ENCODE measurements at regions of chr17 and their contacts with region 1.

Region 1: DNA sequence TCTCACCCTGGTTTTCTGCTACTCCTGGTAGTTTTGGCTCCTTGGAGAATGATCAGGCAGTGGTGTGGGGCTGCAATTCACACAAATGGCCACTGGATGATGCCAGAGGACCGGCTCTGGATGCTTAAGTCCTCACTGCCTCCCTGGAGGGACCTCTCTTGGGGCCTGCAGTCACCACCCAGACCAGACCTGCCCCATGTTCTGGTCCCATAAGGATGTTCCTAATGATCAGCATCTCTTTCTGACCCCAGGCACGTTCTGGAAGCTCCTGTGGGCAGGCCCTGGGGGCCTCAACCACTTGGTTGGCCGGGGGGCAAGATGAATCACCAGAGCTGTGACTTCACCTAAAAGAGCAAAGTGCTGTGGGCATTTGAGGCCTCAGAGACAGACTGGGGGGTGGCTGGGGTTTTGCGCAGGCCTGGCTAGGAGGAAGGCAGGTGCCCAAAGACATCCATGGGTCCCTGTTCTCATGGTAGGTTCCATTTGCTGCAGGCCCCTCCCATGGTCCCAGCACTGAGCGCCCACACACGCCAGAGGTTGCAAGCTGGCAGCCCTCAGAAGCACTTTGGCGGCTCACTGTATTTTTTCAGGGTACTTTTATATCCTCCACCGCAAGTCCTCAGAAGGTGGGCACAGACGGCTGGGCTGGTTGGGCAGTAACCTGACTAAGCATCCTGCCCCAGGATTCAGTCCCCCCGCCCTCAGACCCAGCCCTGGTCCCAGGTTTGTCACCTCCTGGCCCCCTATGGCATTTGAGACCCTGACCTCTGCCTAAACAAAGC is 53.2 kb downstream of the NT5M start:
- DNase-seq: peak; percentile 91 to 96
- ATAC-seq: peak; percentile 86 to 91
- H3K4me3 ChIP-seq: no peak overlapping the region
- H3K27ac ChIP-seq: peak overlapping the region; percentile 55 to 63
- H3K4me1 ChIP-seq: no peaks in the 10 kb centered on the region
- CTCF ChIP-seq: peak; percentile 100
- EP300 ChIP-seq: no peak
- POLR2A ChIP-seq: no peak
- RAD21 ChIP-seq: peak; percentile 100

Region 2: DNA sequence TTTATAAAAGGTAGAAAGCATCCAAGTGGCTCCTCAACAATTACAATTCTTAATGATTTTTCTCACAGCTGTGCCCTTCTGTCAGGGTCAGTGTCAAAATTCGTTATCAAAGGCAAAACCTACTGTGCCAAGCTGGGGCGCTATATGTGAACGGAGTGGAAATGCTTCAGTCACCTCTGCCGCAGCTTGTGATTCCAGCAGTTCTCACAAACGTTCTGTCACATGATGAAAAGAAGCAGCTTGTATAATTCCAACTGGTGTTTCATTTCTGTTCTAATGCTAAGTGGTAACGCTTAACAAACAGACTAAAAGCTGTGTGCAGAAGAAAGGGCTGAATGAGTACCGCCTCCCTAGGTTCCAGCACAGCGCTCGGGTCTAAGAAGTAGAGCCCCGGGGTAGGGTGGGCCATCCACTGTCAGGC is 164.4 kb before region 1 on chr17:
- CTCF ChIA-PET with region 1: no interaction called
- POLR2A ChIA-PET with region 1: no interaction called
- DNase-seq: no peak
- ATAC-seq: no peak
- H3K4me3 ChIP-seq: no peak overlapping the region
- H3K27ac ChIP-seq: no peak overlapping the region
- H3K4me1 ChIP-seq: peaks cover 29% of the 10 kb centered on the region
- CTCF ChIP-seq: no peak
- EP300 ChIP-seq: no peak
- POLR2A ChIP-seq: no peak
- RAD21 ChIP-seq: no peak

Region 3: DNA sequence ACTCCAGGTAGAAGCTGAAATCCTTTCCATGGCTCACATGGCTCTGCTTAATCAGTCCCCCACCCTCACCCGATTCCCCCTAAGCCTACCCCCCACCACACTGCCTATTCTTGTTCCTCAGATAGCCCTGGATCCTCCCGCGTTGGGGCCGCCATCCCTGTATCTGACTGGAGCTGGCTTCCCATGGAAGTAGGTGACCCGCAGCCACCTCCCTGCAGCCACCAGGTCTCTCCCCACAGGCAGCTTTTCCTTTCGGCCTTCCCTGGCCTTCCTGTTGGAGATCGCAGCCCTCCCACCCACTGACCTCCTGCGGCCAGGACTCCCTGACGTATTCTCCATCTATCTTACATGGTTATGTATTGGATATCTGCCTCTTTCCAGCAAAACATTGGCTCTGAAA is 38.2 kb after region 1 on chr17:
- CTCF ChIA-PET with region 1: interaction called, 17 read pairs
- POLR2A ChIA-PET with region 1: no interaction called
- DNase-seq: no peak
- ATAC-seq: no peak
- H3K4me3 ChIP-seq: no peak overlapping the region
- H3K27ac ChIP-seq: no peak overlapping the region
- H3K4me1 ChIP-seq: no peaks in the 10 kb centered on the region
- CTCF ChIP-seq: no peak
- EP300 ChIP-seq: no peak
- POLR2A ChIP-seq: no peak
- RAD21 ChIP-seq: no peak

Region 4: DNA sequence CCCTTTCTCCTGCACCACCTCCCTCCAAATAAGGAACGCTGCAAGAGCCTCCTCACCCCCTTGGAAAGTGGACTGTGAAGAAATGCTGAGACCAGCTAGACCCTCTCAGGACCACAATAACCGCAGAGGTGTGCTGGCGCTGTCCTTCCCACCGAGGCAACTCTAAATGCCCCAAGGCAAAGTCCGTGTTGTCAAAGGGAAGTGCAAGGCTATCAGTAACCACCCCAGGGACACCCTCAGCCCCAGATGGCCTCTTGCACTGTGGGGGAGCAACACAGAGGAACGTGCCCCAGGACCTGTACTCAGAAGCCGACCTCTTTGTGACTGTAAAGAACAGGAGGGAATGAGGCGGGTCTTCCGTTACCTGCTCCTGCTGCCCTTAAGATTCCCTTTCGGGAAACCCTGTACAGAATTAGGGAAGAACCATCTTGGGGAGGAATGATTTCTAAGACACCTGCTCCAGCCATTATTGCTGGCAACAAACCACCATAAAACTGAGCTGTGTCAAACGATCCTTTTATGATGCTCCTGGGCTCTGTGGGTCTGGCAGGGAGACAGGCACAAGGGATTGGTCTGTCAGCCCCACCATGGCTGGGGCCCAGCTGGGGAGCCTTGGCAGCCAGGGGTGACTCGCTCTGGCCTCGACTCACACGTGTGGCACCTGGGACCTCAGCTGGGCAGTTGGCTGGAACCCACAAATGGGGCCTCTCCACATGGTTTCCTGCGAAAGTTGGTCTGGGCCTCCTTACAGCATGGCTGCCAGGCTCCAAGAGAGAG is 105.9 kb after region 1 on chr17:
- CTCF ChIA-PET with region 1: interaction called, 24 read pairs
- POLR2A ChIA-PET with region 1: no interaction called
- DNase-seq: no peak
- ATAC-seq: no peak
- H3K4me3 ChIP-seq: no peak overlapping the region
- H3K27ac ChIP-seq: no peak overlapping the region
- H3K4me1 ChIP-seq: no peaks in the 10 kb centered on the region
- CTCF ChIP-seq: no peak
- EP300 ChIP-seq: no peak
- POLR2A ChIP-seq: no peak
- RAD21 ChIP-seq: no peak

Region 5: GRCh38 chr17:17506811-17507464 is 150.6 kb after region 1 on chr17:
- CTCF ChIA-PET with region 1: interaction called, 24 read pairs
- POLR2A ChIA-PET with region 1: no interaction called
- DNase-seq: no peak
- ATAC-seq: no peak
- H3K4me3 ChIP-seq: no peak overlapping the region
- H3K27ac ChIP-seq: no peak overlapping the region
- H3K4me1 ChIP-seq: peaks cover 11% of the 10 kb centered on the region
- CTCF ChIP-seq: no peak
- EP300 ChIP-seq: no peak
- POLR2A ChIP-seq: no peak
- RAD21 ChIP-seq: no peak

Region 6: DNA sequence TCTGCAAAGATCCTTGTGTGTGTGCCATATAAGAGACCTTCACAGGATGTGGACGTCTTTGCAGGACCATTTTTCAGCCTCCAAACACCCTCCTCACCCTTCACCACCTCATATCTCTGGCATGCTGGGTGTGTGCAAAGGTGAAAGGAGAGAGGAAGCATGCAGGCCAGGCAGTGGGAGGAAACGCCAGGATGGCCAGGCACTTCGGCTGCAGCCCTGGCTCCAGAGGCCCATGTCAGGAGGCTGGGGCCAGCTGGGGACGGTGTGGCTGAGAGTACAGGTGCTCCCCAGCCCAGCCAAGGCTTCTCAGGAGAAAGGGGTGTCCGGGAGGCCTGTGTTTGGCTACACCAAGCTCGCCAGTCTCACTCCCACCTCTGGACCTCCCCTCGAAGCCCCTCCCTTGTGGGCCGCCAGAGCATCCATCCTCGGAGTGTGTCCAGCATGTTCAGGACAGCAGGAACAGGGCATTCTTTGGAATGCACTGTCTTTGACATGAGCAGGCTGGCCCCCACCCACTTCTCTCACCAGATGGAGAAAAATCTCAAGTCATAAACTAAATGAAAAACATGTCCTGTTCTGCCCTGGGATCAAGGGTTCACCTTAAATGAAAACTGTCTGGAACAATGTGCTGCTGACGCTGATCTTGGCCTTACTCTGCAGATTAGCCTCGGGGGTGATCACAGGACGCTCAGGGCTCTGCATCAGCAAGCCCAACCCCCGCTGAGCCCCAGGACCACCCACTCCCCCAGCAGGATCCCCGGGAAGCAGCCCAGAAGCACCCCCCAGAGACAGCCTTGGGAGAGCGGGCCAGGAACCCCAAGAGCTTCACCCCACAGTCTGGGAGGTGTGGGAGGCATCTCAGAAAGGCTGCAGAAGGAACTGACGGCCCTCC is 219.3 kb after region 1 on chr17:
- CTCF ChIA-PET with region 1: interaction called, 236 read pairs
- POLR2A ChIA-PET with region 1: no interaction called
- DNase-seq: no peak
- ATAC-seq: no peak
- H3K4me3 ChIP-seq: no peak overlapping the region
- H3K27ac ChIP-seq: no peak overlapping the region
- H3K4me1 ChIP-seq: peaks cover 2% of the 10 kb centered on the region
- CTCF ChIP-seq: no peak
- EP300 ChIP-seq: no peak
- POLR2A ChIP-seq: no peak
- RAD21 ChIP-seq: no peak

Region 7: GRCh38 chr17:17613708-17614114 is 257.4 kb after region 1 on chr17:
- CTCF ChIA-PET with region 1: interaction called, 76 read pairs
- POLR2A ChIA-PET with region 1: no interaction called
- DNase-seq: peak; percentile 77 to 85
- ATAC-seq: peak; percentile 97 to 98
- H3K4me3 ChIP-seq: no peak overlapping the region
- H3K27ac ChIP-seq: no peak overlapping the region
- H3K4me1 ChIP-seq: no peaks in the 10 kb centered on the region
- CTCF ChIP-seq: peak; percentile 59
- EP300 ChIP-seq: no peak
- POLR2A ChIP-seq: no peak
- RAD21 ChIP-seq: peak; percentile 54 to 55; a peak in 3 of 5 replicates

Region 8: DNA sequence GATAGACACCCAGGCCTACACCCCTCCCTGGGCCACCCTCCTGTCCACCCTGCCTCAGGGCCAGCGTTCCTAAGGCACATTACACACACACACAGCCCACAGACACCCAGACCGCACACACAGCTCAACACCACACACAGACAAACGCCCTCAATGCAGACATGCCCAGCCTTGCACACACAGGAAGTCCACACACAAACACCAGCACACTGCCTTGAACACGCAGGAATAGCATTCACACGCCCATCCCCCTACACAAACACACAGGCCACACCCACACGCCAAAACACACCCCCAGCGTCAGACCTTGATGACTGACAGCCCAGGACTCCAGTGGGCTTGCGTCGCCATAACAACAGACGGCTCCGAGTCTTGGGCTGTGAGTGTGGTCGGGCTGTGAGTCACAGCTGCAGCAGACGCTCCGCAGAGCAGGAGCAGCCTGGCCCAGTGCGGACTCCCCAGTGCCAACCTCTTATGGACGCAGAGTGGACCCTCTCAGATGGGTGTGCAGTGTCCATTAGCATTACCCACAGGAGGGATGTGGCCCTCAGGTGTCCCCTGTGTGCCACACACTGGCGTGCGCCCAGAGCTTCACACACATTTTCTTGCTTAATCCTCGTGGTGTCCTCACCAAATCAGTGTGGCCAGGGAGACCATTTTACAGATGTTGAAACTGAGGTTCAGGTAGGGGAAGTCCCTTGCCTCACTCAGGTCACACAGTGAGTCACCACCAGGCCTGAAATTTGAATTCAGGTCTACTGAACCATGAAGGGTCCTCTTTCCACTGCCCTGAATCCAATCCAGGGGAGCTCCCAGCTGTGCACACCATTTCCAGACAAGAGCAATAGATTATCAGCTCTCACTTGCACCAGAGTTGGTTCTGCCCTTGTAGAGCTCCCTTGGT is 307.1 kb after region 1 on chr17:
- CTCF ChIA-PET with region 1: interaction called, 23 read pairs
- POLR2A ChIA-PET with region 1: no interaction called
- DNase-seq: peak; percentile 80 to 84
- ATAC-seq: peak; percentile 73 to 87
- H3K4me3 ChIP-seq: no peak overlapping the region
- H3K27ac ChIP-seq: peak overlapping the region in 1 of 2 experiments; percentile 22; a peak in 3 of 6 replicates
- H3K4me1 ChIP-seq: peaks cover 20% of the 10 kb centered on the region
- CTCF ChIP-seq: no peak
- EP300 ChIP-seq: no peak
- POLR2A ChIP-seq: no peak
- RAD21 ChIP-seq: no peak